WTC11 (cell line): ENCODE measurements at regions of chr10 and their contacts with region 1.

Region 1: DNA sequence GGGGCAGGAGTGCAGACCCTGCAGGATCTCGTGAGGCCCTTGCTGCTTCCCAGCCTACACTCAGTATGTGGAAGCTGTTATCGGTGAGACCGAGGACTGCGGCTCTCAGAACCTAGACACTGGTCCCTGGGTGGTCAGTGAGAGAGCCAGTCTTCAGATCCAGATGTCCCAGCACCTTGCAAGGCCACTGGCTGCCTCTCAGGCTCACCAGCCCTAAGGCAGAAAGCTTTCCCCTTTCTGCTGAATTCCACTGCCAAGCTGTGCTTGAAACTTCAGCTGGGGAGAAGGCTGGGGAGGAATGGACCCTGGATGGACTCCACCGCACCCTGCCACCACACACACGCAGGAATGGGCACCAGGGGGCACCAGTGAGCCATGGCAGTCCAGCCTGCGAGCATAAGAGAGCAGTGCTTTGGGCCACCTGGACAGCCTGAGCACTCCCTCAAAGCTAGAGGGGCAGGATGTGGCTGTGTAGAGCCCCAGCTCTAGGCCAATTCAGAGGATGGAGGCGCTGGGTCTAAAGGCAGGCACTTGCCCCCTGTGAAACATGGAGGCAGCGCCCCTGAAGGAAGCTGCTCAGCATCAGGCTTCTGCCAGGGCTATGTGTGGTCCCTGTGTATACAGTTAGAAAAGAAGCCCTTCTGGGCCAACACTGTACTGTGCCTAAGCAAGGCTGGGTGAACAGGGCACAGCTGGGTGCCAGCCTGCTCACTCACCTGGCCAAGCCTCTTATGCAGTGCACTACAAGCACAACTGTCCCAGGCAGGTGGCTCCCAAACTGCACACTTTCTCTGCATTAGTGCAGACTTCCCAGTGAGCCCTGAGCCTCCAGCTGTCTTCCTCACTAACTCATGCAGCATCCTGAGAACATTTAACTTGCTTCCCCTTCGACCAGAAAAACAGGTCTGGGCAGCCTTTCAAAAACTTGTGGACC is 21.6 kb downstream of the TMEM72 start:
- DNase-seq: peak; percentile 96
- ATAC-seq: peak; percentile 98
- H3K4me3 Mint-ChIP-seq: no peak overlapping the region
- H3K27ac Mint-ChIP-seq: no peak overlapping the region
- H3K4me1 Mint-ChIP-seq: peaks cover 4% of the 10 kb centered on the region
- H3K27me3 Mint-ChIP-seq: peaks cover 14% of the 10 kb centered on the region
- CTCF ChIP-seq: peak; percentile 93

Region 2: DNA sequence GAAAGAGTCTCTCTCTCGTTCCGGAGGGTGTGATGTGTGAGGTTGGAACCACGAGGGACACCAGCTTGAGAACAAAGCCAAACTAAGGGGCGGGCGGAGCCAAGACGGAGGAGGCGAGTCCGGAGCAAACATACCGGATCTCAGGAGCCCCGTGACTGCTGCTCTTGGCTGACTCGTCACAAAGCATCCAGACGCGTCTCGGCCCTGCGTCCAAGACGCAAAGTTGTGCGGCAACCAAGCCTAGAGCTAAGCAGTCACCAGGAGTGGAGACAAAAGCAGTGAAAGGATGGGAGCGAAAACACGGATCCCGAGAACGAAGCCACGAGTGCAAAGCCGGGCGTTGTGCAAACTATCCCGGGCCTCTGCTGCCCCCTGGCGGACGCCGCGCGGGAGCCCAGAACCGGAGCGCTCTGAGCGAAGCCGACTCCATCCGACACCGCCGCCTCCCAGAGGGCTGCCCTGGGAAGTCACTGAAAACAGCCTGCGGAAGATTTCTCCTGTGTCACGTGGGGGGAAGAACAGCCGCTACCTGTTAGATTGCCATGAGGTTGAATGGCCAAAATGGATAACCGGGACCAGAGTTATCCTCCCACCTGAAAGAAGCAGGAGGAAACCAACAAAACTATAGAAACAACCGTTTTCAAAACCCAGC is 68.0 kb before region 1 on chr10:
- CTCF ChIA-PET with region 1: interaction called, 12 read pairs
- POLR2A ChIA-PET with region 1: no interaction called
- DNase-seq: peak; percentile 95
- ATAC-seq: peak; percentile 92
- H3K4me3 Mint-ChIP-seq: peak overlapping the region; percentile 83
- H3K27ac Mint-ChIP-seq: 0 out of 2 replicates have a peak overlapping the region, but pooled peaks have one; percentile 79
- H3K4me1 Mint-ChIP-seq: peaks cover 37% of the 10 kb centered on the region
- H3K27me3 Mint-ChIP-seq: peaks cover 57% of the 10 kb centered on the region
- CTCF ChIP-seq: peak; percentile 96

Region 3: GRCh38 chr10:44908066-44908749 is 24.6 kb before region 1 on chr10:
- CTCF ChIA-PET with region 1: interaction called, 14 read pairs
- POLR2A ChIA-PET with region 1: no interaction called
- DNase-seq: peak; percentile 35
- ATAC-seq: peak; percentile 58
- H3K4me3 Mint-ChIP-seq: no peak overlapping the region
- H3K27ac Mint-ChIP-seq: no peak overlapping the region
- H3K4me1 Mint-ChIP-seq: peaks cover 38% of the 10 kb centered on the region
- H3K27me3 Mint-ChIP-seq: no peaks in the 10 kb centered on the region; the same call in 1 of the 2 replicates
- CTCF ChIP-seq: no peak

Region 4: DNA sequence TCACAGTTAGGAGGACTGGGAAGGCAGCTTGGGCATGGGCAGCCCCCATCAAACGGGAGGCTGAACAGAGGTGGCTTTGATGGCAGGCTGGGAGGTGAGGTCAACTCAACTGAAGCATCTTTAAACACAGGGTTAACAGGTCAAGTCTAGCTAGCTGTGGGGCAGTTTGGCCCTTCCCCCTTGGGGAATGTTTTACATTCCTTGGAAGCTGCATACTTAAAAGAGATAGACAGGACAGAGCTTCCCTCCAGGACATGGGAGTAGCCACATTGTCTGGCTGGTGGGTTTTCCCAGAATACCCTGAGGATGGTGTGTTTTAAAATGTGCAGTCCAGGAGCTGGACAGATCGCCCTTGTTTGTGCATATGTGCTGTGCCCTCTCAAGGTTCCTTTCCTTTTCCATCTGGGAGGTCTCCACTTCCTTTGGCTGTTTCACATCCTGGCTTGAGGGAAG is 20.0 kb after region 1 on chr10:
- CTCF ChIA-PET with region 1: interaction called, 74 read pairs
- POLR2A ChIA-PET with region 1: interaction called, 3 read pairs
- DNase-seq: no peak
- ATAC-seq: peak; percentile 89
- H3K4me3 Mint-ChIP-seq: no peak overlapping the region
- H3K27ac Mint-ChIP-seq: no peak overlapping the region
- H3K4me1 Mint-ChIP-seq: peaks cover 26% of the 10 kb centered on the region
- H3K27me3 Mint-ChIP-seq: no peaks in the 10 kb centered on the region
- CTCF ChIP-seq: no peak

Region 5: GRCh38 chr10:44965651-44966097 is 32.9 kb after region 1 on chr10:
- CTCF ChIA-PET with region 1: interaction called, 74 read pairs
- POLR2A ChIA-PET with region 1: no interaction called
- DNase-seq: no peak
- ATAC-seq: no peak
- H3K4me3 Mint-ChIP-seq: no peak overlapping the region; the same call in 1 of the 2 replicates
- H3K27ac Mint-ChIP-seq: peak overlapping the region; percentile 88
- H3K4me1 Mint-ChIP-seq: peaks cover 77% of the 10 kb centered on the region
- H3K27me3 Mint-ChIP-seq: peaks cover 2% of the 10 kb centered on the region
- CTCF ChIP-seq: no peak

Region 6: DNA sequence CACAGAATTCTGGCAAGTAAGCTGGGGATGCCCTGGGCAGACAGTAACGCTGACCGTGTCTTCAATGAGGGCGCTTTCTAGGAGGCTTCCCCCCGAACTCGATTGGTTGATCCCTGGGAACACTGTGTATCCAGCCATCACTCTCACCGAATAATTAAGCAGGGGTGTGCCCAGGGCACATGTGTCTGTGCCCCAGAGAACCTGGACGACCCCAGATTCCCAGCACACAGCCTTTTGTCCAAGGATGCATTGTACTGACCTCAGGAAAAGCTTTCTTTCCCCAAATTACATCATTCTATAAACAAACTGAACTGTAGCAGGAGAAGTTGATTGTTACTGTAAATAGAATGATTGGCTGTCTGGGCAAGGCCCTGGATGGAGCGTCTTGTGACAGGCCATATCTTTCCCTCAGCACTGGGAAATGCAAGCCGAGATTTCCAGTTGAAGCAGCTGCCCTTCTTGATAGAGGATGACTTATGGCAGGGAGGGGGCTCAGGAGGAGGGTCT is 52.4 kb after region 1 on chr10:
- CTCF ChIA-PET with region 1: interaction called, 143 read pairs
- POLR2A ChIA-PET with region 1: interaction called, 8 read pairs
- DNase-seq: no peak
- ATAC-seq: no peak
- H3K4me3 Mint-ChIP-seq: no peak overlapping the region
- H3K27ac Mint-ChIP-seq: no peak overlapping the region
- H3K4me1 Mint-ChIP-seq: peaks cover 60% of the 10 kb centered on the region
- H3K27me3 Mint-ChIP-seq: no peaks in the 10 kb centered on the region; the same call in 1 of the 2 replicates
- CTCF ChIP-seq: no peak

Region 7: GRCh38 chr10:45000752-45001380 is 68.1 kb after region 1 on chr10 and contains the start of gene ZNF22:
- CTCF ChIA-PET with region 1: interaction called, 143 read pairs
- POLR2A ChIA-PET with region 1: no interaction called
- DNase-seq: peak; percentile 70
- ATAC-seq: peak; percentile 86
- H3K4me3 Mint-ChIP-seq: peak within 1 kb of the TSS; percentile 79
- H3K27ac Mint-ChIP-seq: peak within 1 kb of the TSS; percentile 70
- H3K4me1 Mint-ChIP-seq: peaks cover 38% of the 10 kb centered on the region
- H3K27me3 Mint-ChIP-seq: peaks cover 14% of the 10 kb centered on the region
- CTCF ChIP-seq: no peak
- total RNA-seq, gene ZNF22: 31.0 to 36.8 TPM (median 35.9 TPM) in 3 replicates